Caco-2 (cell line): ENCODE measurements at regions of chr1 and their contacts with region 1.

Region 1: GRCh38 chr1:87953732-87954344 is 625.2 kb downstream of the LMO4 start:
- DNase-seq: peak; percentile 53 to 69
- H3K4me3 ChIP-seq: no peak overlapping the region
- H3K4me3 Mint-ChIP-seq: no peak overlapping the region
- H3K27ac Mint-ChIP-seq: no peak overlapping the region
- H3K4me1 ChIP-seq: peaks cover 3% of the 10 kb centered on the region; the same call in 1 of the 2 replicates
- H3K4me1 Mint-ChIP-seq: peaks cover 4% of the 10 kb centered on the region
- H3K27me3 ChIP-seq: no peaks in the 10 kb centered on the region
- H3K27me3 Mint-ChIP-seq: no peaks in the 10 kb centered on the region
- CTCF ChIP-seq: peak; percentile 50 to 63

Region 2: GRCh38 chr1:87292684-87293493 is 660.9 kb before region 1 on chr1:
- CTCF ChIA-PET with region 1: no interaction called
- POLR2A ChIA-PET with region 1: no interaction called
- intact Hi-C with region 1: loop called (anchors 10 kb)
- DNase-seq: peak; percentile 53 to 55
- H3K4me3 ChIP-seq: no peak overlapping the region
- H3K4me3 Mint-ChIP-seq: no peak overlapping the region
- H3K27ac Mint-ChIP-seq: no peak overlapping the region
- H3K4me1 ChIP-seq: no peaks in the 10 kb centered on the region
- H3K4me1 Mint-ChIP-seq: no peaks in the 10 kb centered on the region
- H3K27me3 ChIP-seq: no peaks in the 10 kb centered on the region
- H3K27me3 Mint-ChIP-seq: no peaks in the 10 kb centered on the region
- CTCF ChIP-seq: peak; percentile 44 to 51

Region 3: GRCh38 chr1:87632232-87632631 is 321.6 kb before region 1 on chr1:
- CTCF ChIA-PET with region 1: no interaction called
- POLR2A ChIA-PET with region 1: no interaction called
- intact Hi-C with region 1: no loop called
- DNase-seq: no peak
- H3K4me3 ChIP-seq: no peak overlapping the region
- H3K4me3 Mint-ChIP-seq: no peak overlapping the region
- H3K27ac Mint-ChIP-seq: no peak overlapping the region
- H3K4me1 ChIP-seq: no peaks in the 10 kb centered on the region
- H3K4me1 Mint-ChIP-seq: no peaks in the 10 kb centered on the region
- H3K27me3 ChIP-seq: no peaks in the 10 kb centered on the region
- H3K27me3 Mint-ChIP-seq: no peaks in the 10 kb centered on the region
- CTCF ChIP-seq: no peak

Region 4: GRCh38 chr1:87673748-87674147 is 280.1 kb before region 1 on chr1:
- CTCF ChIA-PET with region 1: no interaction called
- POLR2A ChIA-PET with region 1: no interaction called
- intact Hi-C with region 1: loop called (anchors 1 kb)
- DNase-seq: no peak
- H3K4me3 ChIP-seq: no peak overlapping the region
- H3K4me3 Mint-ChIP-seq: no peak overlapping the region
- H3K27ac Mint-ChIP-seq: no peak overlapping the region
- H3K4me1 ChIP-seq: no peaks in the 10 kb centered on the region
- H3K4me1 Mint-ChIP-seq: no peaks in the 10 kb centered on the region
- H3K27me3 ChIP-seq: no peaks in the 10 kb centered on the region
- H3K27me3 Mint-ChIP-seq: no peaks in the 10 kb centered on the region
- CTCF ChIP-seq: no peak

Region 5: DNA sequence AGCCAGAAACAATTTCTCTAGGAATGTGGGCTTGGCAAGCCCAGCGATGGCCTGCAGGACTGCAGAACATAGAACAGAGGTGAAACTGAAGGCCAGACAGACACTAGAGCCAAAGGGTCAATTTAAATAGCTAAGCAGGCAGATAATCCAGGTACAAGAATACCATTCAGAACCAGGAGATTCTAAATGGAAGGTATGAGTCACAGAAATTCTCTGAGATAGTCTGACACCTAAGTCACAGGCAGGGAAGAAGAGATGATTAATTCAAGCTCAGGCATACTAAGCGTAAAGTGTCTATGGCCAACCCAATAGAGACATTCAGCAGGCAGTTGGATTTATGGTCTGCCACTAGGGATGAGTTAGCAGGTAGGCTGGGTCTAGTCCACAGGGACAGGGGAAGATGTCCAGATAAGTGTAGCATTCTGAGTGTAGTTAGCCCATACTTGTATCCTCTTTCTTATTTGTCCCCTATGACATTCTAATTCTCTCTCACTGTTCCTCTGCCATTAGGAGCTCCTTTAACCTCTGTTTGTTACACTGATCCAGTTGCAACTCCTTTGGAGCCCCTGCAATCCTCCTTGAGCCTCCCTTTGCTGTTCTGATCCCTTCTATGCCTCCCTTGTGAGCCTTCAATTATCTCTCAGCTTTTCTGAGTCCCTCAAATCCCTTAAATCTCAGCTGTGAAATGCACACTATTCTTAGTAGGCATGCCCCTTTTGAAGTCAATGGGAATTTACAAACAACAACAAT is 241.4 kb before region 1 on chr1:
- CTCF ChIA-PET with region 1: no interaction called
- POLR2A ChIA-PET with region 1: no interaction called
- intact Hi-C with region 1: loop called (anchors 10 kb)
- DNase-seq: peak; percentile 44 to 68
- H3K4me3 ChIP-seq: no peak overlapping the region
- H3K4me3 Mint-ChIP-seq: peak overlapping the region; percentile 8
- H3K27ac Mint-ChIP-seq: peak overlapping the region; percentile 63
- H3K4me1 ChIP-seq: peaks cover 31% of the 10 kb centered on the region
- H3K4me1 Mint-ChIP-seq: peaks cover 41% of the 10 kb centered on the region
- H3K27me3 ChIP-seq: no peaks in the 10 kb centered on the region
- H3K27me3 Mint-ChIP-seq: no peaks in the 10 kb centered on the region
- CTCF ChIP-seq: no peak

Region 6: DNA sequence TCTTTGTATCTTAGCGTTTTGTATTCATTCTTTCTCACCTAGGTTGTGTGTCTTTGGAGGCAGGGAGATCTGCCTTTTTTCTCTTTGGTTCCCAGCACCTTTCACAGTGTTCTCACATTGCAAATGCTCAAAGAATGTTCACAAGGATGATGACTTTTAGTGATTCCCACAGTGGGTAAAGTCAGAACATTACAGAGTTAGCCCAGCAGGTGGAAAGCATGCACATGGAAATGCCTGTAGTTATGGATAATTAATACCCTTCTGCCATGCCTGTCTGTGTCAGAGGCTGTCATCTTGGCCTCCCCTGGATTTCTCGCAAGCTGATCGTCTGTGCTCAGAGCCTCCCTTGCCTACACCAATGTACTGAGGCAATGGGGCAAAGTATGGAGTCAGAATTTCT is 166.3 kb before region 1 on chr1:
- CTCF ChIA-PET with region 1: no interaction called
- POLR2A ChIA-PET with region 1: interaction called, 9 read pairs
- intact Hi-C with region 1: loop called (anchors 1 kb)
- DNase-seq: peak; percentile 60 to 66
- H3K4me3 ChIP-seq: no peak overlapping the region
- H3K4me3 Mint-ChIP-seq: peak overlapping the region; percentile 58
- H3K27ac Mint-ChIP-seq: peak overlapping the region; percentile 85
- H3K4me1 ChIP-seq: peaks cover 60% of the 10 kb centered on the region
- H3K4me1 Mint-ChIP-seq: peaks cover 47% of the 10 kb centered on the region
- H3K27me3 ChIP-seq: no peaks in the 10 kb centered on the region
- H3K27me3 Mint-ChIP-seq: no peaks in the 10 kb centered on the region
- CTCF ChIP-seq: peak in 1 of 2 experiments; percentile 15